Aorta (tissue), 5 donors: ENCODE measurements at regions of chr11 and their contacts with region 1.

Region 1: DNA sequence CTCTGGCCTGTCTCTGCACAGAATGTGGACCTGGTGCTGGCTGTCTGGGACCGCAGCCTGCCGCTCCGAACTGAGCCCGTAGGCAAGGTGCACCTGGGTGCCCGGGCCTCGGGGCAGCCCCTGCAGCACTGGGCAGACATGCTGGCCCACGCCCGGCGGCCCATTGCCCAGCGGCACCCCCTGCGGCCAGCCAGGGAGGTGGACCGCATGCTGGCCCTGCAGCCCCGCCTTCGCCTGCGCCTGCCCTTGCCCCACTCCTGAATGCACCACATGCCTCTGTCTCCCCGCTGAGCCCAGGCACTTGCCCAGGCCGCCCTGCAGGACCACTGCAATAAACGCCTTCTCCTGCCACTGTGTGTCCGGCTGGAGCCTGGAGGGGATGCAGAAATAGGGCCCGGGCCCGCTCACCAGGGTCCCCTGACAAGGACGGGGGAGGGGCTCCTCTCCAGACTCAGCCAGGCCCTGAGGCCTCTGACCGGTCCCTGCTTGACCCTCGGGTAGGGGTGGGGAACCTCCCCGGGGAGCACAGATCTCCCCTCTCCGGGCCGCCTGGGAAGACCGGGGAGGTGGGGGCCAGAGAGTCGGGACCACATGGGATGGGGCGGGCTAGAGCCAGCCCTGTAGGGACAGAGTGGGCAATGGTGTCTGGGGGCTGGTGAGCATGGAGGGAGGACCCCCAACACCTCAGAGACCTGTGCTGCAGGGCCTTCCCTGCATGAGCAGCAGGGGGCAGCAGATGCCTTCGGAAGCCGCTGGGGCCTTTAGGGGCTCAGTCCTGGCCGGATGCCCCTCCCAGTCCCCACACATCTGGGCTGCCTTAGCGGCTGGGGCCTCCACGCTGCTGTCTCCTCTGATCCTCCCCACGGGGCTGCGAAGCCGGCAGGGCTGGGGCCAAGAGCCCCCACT is 1.4 kb upstream of the TNNI2 start:
- DNase-seq: peak; percentile 81 to 90
- ATAC-seq: peak; percentile 67
- H3K4me3 ChIP-seq: no peak overlapping the region
- H3K27ac ChIP-seq: no peak overlapping the region
- H3K4me1 ChIP-seq: no peaks in the 10 kb centered on the region
- H3K27me3 ChIP-seq: no peaks in the 10 kb centered on the region

Region 2: DNA sequence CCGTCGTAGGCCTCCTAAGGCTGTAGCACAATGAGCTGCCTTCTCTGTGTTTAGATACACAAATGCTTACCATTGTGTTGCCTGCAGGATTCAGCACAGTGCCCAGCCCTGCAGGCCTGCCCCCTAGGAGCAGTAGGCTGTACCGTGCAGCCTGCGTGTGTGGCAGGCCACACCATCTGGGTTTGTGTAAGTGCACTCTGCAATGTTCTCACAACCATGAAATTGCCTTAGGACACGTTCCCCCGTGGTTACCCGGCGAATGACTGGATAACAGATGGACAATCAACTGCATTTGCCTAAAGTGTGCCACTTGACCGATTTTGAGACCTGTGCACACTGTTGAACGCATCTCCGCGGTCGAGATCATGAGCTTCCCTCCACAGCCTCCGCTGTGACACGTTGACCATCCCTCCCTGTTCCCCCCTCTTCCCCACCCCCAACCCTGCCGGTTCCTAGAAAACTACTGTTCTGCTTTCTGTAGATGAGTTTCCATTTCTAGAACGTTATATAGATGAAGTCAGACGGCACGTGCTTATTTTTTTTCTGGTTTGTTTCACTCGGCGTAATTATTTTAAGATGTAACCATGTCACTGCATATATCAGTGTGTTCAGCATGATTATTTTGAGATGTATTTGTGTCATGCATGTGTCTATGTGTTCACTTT is 51.5 kb before region 1 on chr11:
- intact Hi-C with region 1: no loop called
- DNase-seq: peak in 1 of 2 donors; percentile 81
- ATAC-seq: no peak
- H3K4me3 ChIP-seq: no peak overlapping the region
- H3K27ac ChIP-seq: no peak overlapping the region
- H3K4me1 ChIP-seq: no peaks in the 10 kb centered on the region
- H3K27me3 ChIP-seq: no peaks in the 10 kb centered on the region

Region 3: DNA sequence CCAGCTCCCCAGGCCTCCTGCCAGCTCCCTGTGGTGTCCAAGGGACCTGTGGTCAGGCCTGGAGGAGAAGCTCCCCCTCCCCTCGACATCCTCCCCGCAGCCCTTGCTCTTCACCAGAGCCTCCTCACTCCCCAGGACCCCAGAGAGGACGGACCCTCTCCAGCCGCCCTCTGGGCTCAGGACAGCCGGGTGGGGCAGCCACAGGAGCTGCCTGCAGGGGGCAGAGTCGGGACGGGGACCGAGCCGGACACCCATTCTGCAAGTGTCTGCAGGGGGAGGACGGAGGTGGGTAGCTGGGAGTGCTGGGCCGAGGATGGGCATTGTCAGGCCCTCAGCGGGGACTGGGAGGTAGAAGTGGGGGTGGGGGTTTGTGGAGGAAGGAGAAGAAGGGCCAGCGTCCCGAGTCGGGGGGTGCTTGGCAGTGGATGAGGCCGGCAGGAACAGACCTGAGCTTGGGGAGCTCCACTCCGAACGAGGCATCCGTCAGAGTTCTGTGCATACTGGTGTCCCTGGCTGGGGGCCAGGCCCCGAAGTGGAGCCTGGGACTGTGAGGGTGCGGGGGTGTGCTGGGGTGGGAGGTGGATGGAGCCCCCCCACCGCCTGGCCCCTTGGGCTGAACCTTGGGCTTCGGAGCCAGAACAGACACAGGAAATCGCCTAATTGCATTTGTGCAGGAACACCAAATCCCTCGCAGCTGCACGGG is 39.1 kb after region 1 on chr11:
- intact Hi-C with region 1: loop called in 1 of 2 experiments (anchors 5 kb)
- DNase-seq: peak; percentile 73 to 83
- ATAC-seq: no peak
- H3K4me3 ChIP-seq: no peak overlapping the region
- H3K27ac ChIP-seq: no peak overlapping the region
- H3K4me1 ChIP-seq: no peaks in the 10 kb centered on the region
- H3K27me3 ChIP-seq: no peaks in the 10 kb centered on the region

Region 4: DNA sequence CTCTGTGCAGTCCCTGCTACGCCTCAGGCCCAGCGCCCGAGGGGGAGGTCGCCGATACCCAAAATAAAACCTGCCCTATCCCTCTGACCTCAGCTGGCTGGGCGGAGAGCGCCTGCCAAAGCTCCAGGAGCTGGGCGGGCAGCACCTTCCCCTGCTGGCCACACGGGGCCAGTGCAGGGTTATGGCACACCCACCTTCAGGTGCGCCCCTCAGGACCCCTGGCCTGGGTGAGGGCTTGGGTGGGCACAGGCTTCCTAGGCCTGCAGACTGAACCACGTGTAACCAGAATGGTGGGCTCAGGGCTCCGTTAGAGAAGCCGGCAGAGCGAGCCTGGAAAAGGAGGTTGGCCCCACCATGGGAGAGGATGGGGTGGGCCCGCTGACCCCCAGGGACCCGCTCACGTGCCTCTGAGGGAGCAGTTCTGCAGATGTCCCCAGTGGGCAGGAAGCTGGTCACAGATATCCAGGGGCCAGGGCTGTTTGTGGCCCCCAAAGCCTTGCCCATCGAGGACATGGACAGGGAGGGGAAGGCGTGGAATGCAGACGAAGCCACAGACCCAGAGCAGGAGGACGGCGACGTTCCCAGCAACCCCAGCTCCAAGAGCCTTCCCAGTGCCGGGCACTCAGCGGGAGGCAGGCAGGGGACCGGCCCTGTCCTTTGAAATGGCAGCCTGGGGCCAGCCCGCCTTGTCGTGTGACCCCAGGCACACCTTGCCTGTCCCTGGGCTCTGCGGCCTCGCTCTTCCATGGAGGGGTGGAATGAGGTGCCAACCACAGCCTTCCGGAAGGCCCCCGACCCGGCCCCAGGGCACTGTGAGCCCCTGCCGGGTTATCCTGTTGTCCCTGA is 80.5 kb after region 1 on chr11:
- intact Hi-C with region 1: loop called in 1 of 2 experiments (anchors 5 kb)
- DNase-seq: peak; percentile 53 to 70
- ATAC-seq: no peak
- H3K4me3 ChIP-seq: no peak overlapping the region
- H3K27ac ChIP-seq: no peak overlapping the region
- H3K4me1 ChIP-seq: no peaks in the 10 kb centered on the region
- H3K27me3 ChIP-seq: no peaks in the 10 kb centered on the region

Region 5: DNA sequence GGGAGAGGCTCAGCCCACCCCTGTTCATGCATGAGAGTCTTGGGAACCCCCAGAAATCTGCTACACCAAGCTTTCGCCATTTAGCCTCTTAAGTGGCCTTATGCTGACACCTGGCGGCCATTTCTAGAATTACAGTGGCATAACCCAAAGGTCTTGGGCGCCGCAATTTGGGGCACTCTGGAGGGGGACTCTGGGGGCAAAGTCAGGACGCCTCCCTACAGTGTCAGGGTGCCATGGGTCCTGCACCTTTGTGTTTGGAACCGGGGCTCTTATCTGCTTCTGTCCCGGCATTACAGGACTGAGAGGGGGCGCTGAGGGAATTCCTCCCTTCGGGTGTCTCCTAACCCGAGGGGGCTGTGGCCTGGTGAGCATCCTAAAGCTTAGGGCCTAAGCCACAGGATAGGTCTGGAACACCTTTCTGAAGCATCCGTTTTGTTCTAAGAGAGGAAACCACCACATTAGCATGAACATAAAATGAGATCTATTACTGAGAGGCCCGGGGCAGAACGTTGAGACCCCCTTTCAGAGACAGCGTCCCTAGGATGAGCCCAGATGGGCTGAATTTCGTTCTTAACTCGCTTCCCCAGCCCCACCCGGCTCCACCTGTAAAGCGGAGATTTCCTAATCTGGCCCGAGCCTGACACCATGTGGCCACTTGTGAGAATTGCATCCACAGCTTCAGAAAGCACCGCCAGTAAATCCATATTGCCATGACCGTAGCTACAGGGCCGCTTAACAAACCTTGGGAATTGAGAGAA is 314.3 kb after region 1 on chr11:
- intact Hi-C with region 1: loop called (anchors 5 kb)
- DNase-seq: peak; percentile 79 to 90
- ATAC-seq: peak; percentile 80
- H3K4me3 ChIP-seq: no peak overlapping the region
- H3K27ac ChIP-seq: no peak overlapping the region
- H3K4me1 ChIP-seq: no peaks in the 10 kb centered on the region
- H3K27me3 ChIP-seq: no peaks in the 10 kb centered on the region